Naive thymus-derived CD4-positive, alpha-beta T cell (primary cell): ENCODE measurements at regions of chr4 and their contacts with region 1.

Region 1: GRCh38 chr4:153541456-153542096 is 75.4 kb downstream of the TMEM131L start:
- DNase-seq: no peak
- ATAC-seq: no peak
- H3K4me3 ChIP-seq: no peak overlapping the region
- H3K4me3 Mint-ChIP-seq: peak overlapping the region; percentile 1 to 71 (median 39)
- H3K27ac ChIP-seq: peak overlapping the region; percentile 15
- H3K27ac Mint-ChIP-seq: peak overlapping the region in 8 of 9 donors; percentile 48 to 95 (median 78)
- H3K4me1 ChIP-seq: peaks cover 13 to 70% of the 10 kb centered on the region in 2 donors
- H3K4me1 Mint-ChIP-seq: peaks cover 38 to 94% (median 89%) of the 10 kb centered on the region in 7 donors
- H3K27me3 ChIP-seq: no peaks in the 10 kb centered on the region
- H3K27me3 Mint-ChIP-seq: no peaks in the 10 kb centered on the region

Region 2: DNA sequence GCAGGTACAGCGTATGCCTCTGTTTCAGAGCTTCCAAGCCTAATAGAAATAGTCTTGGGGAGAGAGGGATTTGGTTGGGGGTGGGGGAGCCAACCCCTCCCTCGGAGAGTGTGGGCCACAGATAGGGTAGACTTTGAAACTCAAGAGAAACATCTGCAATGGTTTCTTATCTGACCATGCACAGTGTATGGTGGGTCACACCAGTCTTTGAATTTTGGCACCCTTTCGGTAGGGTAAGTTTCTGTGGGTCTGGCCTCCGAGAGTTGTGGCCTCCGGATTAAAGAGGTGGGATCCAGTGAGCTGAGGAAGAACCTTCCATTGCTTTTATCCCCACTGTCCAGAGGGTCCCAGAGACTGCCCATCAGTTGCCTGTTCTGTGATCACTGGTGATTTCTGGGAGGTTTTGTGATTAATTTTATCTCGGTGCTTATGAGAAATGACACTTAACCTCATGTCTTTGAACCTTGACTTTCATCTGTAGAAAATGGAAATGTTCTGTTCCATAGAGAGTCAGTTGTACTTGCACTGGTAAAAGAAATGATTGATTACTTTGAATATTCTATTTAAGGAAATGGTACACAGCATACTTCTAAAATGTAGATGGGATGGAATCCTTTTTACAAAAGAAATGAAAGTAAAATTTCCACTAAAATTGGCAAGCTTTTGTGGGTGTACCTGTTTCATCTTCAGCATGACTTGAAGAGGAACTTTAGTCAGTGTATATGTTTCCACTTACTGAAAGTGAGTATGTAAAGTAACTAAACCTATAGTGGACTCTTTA is 12.7 kb before region 1 on chr4:
- CTCF ChIA-PET with region 1: interaction called, 3 read pairs
- POLR2A ChIA-PET with region 1: interaction called, 8 read pairs
- intact Hi-C with region 1: loop called in 1 of 2 experiments (anchors 1 kb)
- DNase-seq: peak in 5 of 9 donors; percentile 21 to 32 (median 27)
- ATAC-seq: peak; percentile 18
- H3K4me3 ChIP-seq: peak overlapping the region; percentile 24
- H3K4me3 Mint-ChIP-seq: peak overlapping the region; percentile 62 to 89 (median 80)
- H3K27ac ChIP-seq: peak overlapping the region; percentile 68
- H3K27ac Mint-ChIP-seq: peak overlapping the region; percentile 86 to 96 (median 90)
- H3K4me1 ChIP-seq: peaks cover 71 to 94% of the 10 kb centered on the region in 2 donors
- H3K4me1 Mint-ChIP-seq: peaks cover 82 to 99% (median 96%) of the 10 kb centered on the region in 7 donors
- H3K27me3 ChIP-seq: no peaks in the 10 kb centered on the region
- H3K27me3 Mint-ChIP-seq: no peaks in the 10 kb centered on the region

Region 3: DNA sequence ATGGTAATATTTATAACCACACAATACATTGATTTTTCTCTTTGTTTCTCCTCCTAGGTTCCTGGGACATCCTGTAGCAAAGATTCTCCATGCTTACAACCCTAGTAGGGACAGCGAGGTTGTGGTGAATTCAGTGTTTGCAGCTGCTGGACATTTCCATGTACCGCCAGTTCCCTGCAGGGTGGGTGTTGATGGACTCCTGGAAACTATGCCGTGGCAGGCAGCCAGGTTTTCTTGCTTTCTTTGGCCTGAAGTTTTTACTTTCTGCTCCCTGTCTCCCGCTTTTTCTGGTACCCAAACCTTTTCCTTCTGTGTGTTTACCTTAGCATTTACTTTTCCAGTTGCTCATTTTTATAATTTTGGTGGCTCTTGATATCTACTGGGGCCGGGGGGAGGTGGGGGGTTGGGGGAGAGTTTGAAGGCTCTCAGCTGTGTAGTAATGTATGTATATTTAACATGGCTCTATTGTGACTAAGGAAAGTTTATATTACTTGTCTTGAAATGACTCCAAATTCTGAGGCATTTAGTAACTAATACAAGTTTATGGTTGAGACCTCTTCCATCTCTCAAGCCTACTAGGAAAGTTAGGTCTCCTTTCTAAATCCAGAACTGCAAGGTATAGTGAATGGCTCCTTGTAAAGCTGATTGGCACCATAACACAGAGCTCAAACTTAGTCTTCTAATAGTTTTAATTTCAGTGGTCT is 14.3 kb after region 1 on chr4:
- CTCF ChIA-PET with region 1: interaction called, 3 read pairs
- POLR2A ChIA-PET with region 1: interaction called, 4 read pairs
- intact Hi-C with region 1: loop called in 1 of 2 experiments (anchors 2 kb)
- DNase-seq: no peak
- ATAC-seq: no peak
- H3K4me3 ChIP-seq: no peak overlapping the region
- H3K4me3 Mint-ChIP-seq: no peak overlapping the region
- H3K27ac ChIP-seq: no peak overlapping the region
- H3K27ac Mint-ChIP-seq: peak overlapping the region in 7 of 9 donors; percentile 8 to 84 (median 43)
- H3K4me1 ChIP-seq: no peaks in the 10 kb centered on the region
- H3K4me1 Mint-ChIP-seq: peaks cover 11 to 77% (median 61%) of the 10 kb centered on the region in 7 donors
- H3K27me3 ChIP-seq: no peaks in the 10 kb centered on the region
- H3K27me3 Mint-ChIP-seq: no peaks in the 10 kb centered on the region